OCI-LY7 (cell line): ENCODE measurements at regions of chr1 and their contacts with region 1.

Region 1: DNA sequence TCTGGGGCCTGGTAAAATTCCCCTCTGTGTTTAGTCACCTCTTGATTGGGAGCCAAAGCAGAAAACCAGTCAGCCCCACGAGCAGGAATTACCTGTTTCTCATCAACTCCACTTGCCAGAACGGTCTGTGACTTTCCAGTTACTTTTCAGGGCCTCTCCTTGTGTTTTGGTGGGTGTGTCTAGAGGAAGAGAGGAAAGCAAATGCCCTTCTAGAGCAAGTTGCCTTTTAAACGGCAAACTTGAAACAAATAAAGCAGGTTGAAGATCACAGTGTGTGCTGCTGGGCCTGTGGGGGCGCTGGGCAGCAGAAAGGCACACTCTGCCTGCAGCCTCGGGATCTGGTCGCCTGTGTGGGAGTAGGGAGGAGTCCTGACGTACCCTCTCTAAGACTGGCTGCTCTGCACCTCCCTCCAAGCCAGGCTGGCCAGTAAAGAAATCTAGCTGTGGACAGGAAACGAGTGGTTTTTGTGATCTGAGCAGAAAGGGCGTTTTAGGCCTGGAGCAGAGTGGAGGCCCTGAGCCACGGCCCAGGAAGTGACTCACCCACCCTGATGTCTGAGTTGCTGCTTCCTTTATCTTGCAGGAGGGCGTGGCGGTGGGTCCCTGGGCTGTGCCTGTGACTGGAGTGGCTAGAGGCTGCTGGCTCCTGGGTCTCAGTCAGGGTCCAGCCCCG is 11.1 kb upstream of the S100A11 start:
- DNase-seq: peak; percentile 86
- H3K4me3 ChIP-seq: peak overlapping the region; percentile 14
- H3K27ac ChIP-seq: peak overlapping the region; percentile 63
- H3K4me1 ChIP-seq: peaks cover 17% of the 10 kb centered on the region
- CTCF ChIP-seq: peak; percentile 88

Region 2: DNA sequence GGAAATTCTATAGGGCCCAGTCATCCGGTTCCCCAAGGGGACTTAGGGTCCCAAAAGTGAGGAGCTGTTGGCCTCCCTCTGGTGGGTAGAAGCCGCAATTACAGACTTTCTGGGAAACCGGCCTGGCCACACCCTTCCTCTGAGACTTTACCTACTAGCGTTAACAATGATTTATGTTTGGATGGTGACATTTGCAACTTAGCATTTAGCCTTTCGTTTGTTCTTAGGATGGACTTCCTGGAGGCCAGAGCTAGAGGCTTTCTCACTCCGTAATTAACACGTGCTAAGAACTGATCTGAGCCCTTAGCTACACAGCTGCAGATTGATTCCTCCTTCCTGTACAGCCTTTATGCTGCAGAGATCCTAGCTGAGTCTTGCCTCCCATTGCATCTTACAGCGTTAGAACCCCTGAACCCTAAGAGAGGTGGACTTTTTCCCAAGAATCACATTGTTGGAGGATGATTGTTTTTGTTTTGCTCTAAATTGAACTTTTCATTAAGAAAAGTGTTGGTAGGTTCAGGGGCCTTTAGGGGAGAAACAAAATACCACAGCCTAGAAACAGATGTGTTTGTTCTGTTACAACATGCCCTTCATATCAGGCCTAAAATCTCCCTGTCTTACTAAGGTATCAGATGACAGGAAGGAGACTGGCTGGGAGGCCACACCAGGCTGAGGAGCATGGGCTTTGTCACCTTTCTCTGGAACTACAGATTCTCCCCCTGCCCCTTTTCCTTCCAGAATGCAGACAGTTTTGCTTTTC is 13.0 kb before region 1 on chr1:
- CTCF ChIA-PET with region 1: interaction called, 3 read pairs
- POLR2A ChIA-PET with region 1: interaction called, 38 read pairs
- intact Hi-C with region 1: no loop called
- DNase-seq: peak; percentile 76
- H3K4me3 ChIP-seq: no peak overlapping the region
- H3K27ac ChIP-seq: peak overlapping the region; percentile 50
- H3K4me1 ChIP-seq: peaks cover 29% of the 10 kb centered on the region
- CTCF ChIP-seq: peak; percentile 83

Region 3: DNA sequence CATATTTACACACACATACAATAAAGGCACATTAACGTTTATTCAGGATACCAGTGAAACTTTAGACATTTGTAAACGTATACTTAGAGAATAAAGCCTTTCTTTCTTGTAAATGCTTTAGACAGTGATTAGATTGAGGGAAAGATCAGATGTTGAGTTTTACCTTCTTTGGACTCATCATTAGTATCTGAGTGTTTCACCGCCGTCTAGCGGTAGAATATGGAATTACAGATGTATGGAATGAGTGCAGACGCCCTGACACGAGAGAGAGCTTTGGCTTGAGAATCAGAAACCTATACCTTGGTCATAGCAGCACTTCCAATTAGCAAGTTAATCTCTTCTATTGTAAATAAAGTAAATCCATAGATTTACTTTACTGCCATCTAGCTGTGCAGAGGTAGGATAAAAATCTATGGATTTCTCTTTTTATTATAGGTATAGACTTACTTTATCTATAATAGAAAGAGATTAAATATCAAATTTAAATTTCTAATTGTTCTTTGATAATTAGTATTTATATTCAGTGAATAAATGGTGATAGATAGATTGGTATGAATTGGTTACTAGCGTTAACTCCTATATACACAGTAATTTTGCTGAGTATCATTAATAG is 299.4 kb after region 1 on chr1:
- CTCF ChIA-PET with region 1: no interaction called
- POLR2A ChIA-PET with region 1: no interaction called
- intact Hi-C with region 1: loop called (anchors 5 kb)
- DNase-seq: peak; percentile 58
- H3K4me3 ChIP-seq: no peak overlapping the region
- H3K27ac ChIP-seq: no peak overlapping the region
- H3K4me1 ChIP-seq: no peaks in the 10 kb centered on the region
- CTCF ChIP-seq: peak; percentile 92

Region 4: DNA sequence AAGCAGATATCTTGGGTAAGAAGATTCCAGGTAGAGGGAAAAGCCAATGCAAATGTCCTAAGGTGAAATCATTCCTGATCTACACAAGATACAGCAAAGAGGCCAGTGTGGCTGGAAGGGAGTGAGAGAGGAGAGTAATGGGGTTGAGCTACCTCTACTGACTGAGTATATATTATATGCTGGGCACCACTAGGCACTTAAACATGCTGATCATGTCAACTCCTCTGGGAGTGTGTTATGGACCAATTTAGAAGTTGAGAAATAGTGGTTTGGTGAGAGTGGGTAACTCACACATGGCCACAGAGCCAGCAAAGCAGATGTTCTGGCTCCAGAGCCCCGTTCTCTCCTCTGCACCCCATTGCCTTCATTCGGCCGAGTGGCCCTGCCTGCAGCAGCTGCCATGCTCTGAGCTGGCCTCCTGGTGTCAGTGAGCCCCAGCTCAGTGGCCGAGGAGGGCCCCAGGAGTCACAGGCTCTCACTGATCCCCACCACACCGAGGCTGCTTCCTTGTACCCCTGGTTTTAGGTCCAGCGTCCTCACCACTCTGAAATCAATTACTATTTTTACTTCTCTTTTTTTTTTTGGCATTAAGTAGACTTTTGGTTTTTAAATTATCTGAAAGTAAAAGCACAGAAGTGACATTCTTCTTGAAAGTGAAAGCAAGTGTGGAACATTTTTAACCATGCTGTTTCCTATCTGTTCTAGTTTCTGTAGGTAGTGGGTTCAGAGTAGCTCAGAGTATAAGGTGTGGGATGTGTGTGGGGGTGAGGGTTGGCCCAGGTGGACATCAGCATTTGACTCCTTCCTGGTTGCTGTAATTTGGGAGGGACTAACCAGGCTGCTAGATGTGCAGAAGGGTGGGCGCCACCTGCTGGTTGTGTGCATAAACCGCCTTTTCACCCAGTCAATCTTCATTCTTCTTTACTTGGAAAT is 412.0 kb after region 1 on chr1:
- CTCF ChIA-PET with region 1: interaction called, 3 read pairs
- POLR2A ChIA-PET with region 1: interaction called, 3 read pairs
- intact Hi-C with region 1: loop called (anchors 5 kb)
- DNase-seq: peak; percentile 77
- H3K4me3 ChIP-seq: peak overlapping the region; percentile 9
- H3K27ac ChIP-seq: no peak overlapping the region
- H3K4me1 ChIP-seq: peaks cover 5% of the 10 kb centered on the region
- CTCF ChIP-seq: peak; percentile 96